ENCODE measurements at regions of chr13 and their contacts with region 1.

Region 1: GRCh38 chr13:23921451-23921888 is 24.2 kb upstream of the C1QTNF9B start:
- DNase-seq: peak; percentile 72
- ATAC-seq: no peak
- H3K4me3 ChIP-seq: no peak overlapping the region
- H3K27ac ChIP-seq: no peak overlapping the region
- H3K4me1 ChIP-seq: peaks cover 10% of the 10 kb centered on the region
- H3K27me3 ChIP-seq: no peaks in the 10 kb centered on the region
- CTCF ChIP-seq: peak; percentile 91

Region 2: DNA sequence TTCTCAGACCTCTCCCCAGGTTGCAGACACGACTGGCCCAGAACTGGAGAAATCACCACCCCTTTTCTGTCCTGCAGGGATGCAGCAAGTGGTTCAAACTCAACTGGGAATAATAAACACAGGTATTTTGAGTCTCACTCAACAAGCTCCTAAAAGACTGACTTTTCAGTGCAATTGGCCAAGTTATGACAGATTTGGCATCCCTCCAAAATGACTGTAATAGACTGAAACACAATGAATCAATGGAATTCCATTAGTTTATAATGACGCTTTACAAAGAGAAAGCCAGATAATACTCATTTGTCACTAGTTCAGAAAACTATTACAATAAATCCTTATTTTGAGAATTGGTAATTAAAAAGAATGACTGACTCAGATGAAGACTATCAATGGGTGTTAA is 70.4 kb before region 1 on chr13:
- CTCF ChIA-PET with region 1: no interaction called
- POLR2A ChIA-PET with region 1: no interaction called
- intact Hi-C with region 1: no loop called
- DNase-seq: peak; percentile 68
- ATAC-seq: no peak
- H3K4me3 ChIP-seq: no peak overlapping the region
- H3K27ac ChIP-seq: peak overlapping the region; percentile 22
- H3K4me1 ChIP-seq: peaks cover 18% of the 10 kb centered on the region
- H3K27me3 ChIP-seq: no peaks in the 10 kb centered on the region
- CTCF ChIP-seq: no peak

Region 3: DNA sequence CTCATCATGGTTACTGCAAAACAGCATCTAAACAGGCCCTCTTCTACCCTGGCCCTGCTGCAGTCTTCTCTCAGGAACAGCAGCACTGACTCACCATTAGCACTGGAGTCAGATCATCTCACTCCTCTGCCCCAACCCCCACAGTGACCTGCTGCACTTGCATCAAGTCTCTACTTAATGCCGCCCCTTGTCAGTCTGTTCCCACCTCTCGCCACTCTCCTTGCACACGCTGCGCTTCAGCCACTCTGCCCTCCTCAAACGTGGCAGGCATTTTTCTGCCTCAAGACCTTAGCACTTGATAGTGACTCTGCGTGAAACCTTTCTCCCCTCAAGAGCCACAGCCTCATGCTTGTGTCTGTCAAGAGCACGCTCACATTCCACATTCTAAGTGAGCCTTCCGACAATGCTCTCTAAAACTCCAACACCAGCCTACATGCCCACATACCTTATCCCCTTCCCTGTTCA is 54.4 kb before region 1 on chr13:
- CTCF ChIA-PET with region 1: no interaction called
- POLR2A ChIA-PET with region 1: no interaction called
- intact Hi-C with region 1: no loop called
- DNase-seq: peak; percentile 64
- ATAC-seq: peak; percentile 64
- H3K4me3 ChIP-seq: no peak overlapping the region
- H3K27ac ChIP-seq: peak overlapping the region; percentile 99
- H3K4me1 ChIP-seq: peaks cover 56% of the 10 kb centered on the region
- H3K27me3 ChIP-seq: no peaks in the 10 kb centered on the region
- CTCF ChIP-seq: no peak

Region 4: GRCh38 chr13:23960566-23961156 is 39.2 kb after region 1 on chr13:
- CTCF ChIA-PET with region 1: interaction called, 12 read pairs
- POLR2A ChIA-PET with region 1: no interaction called
- intact Hi-C with region 1: loop called (anchors 1 kb)
- DNase-seq: peak; percentile 73
- ATAC-seq: peak; percentile 14; the same call in 1 of the 2 replicates
- H3K4me3 ChIP-seq: no peak overlapping the region
- H3K27ac ChIP-seq: no peak overlapping the region
- H3K4me1 ChIP-seq: peaks cover 45% of the 10 kb centered on the region
- H3K27me3 ChIP-seq: no peaks in the 10 kb centered on the region
- CTCF ChIP-seq: peak; percentile 84

Region 5: DNA sequence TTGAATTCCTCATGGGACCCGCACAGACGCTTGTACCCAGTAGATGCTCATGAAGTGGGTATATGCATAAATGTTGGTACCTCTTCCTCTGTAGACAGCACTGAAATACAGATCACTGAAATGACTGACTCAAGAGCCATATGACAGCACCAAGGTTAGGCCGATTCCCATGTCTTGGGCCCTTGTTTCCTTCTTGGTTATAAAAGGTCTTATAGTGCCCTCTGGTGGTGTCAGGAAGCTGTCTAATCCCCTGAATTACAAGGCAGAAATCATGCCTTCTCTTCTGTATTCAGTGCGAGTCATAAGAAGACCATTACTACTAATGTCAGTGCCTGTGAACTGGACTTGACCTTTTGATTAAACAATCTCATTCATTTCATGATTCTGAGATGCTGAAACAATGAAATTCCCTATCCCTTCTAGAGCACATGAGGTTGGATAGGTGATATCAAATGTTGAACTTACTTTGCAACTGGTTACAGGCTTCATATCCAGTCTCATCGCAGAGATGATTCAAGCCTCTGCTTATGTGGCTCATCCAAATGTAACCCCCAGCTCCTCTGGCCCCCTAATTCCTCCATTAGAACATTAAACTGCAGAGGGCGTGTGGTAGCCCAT is 298.7 kb after region 1 on chr13:
- CTCF ChIA-PET with region 1: no interaction called
- POLR2A ChIA-PET with region 1: no interaction called
- intact Hi-C with region 1: loop called (anchors 5 kb)
- DNase-seq: peak; percentile 88
- ATAC-seq: peak; percentile 83
- H3K4me3 ChIP-seq: no peak overlapping the region
- H3K27ac ChIP-seq: peak overlapping the region; percentile 71
- H3K4me1 ChIP-seq: peaks cover 40% of the 10 kb centered on the region
- H3K27me3 ChIP-seq: no peaks in the 10 kb centered on the region
- CTCF ChIP-seq: peak; percentile 86

Measured in PC-3 (cell line).